CD14-positive monocyte (primary cell): ENCODE measurements at regions of chr4 and their contacts with region 1.

Region 1: DNA sequence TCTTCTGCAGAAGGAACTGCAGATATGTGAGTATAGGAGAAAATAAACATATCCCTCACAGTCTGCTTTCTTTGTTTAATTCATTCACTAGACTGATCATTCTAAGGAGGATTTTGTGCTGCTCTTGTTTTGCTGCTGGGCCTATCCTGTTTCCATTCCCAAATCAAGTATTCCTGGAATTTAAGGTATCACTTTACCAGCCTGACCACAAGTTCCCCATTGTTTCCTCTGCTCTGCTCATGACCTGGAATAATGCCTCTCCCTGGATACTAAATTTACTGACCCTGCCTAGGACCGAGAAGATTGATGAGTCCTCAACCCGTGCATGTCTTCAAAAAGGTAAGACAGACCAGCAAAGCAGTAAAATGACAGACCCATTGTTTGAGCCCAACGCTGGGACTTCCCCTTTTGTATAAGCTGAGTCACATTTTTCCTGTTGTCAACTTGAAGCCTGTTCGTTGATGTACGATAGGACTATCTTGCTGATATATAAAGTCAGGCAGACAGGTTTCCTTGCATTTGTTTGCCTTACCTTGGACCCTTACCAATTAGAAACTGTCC is 85.5 kb upstream of the TET2 start:
- DNase-seq: peak; percentile 81 to 92 (median 90)
- H3K4me3 ChIP-seq: peak overlapping the region; percentile 8 to 53 (median 37)
- H3K4me3 Mint-ChIP-seq: peak overlapping the region; percentile 49 to 72
- H3K27ac ChIP-seq: peak overlapping the region; percentile 67 to 94
- H3K27ac Mint-ChIP-seq: peak overlapping the region; percentile 97 to 100 (median 99)
- H3K4me1 ChIP-seq: peaks cover 73 to 79% of the 10 kb centered on the region in 2 donors
- H3K4me1 Mint-ChIP-seq: peaks cover 76% of the 10 kb centered on the region
- H3K27me3 ChIP-seq: no peaks in the 10 kb centered on the region
- H3K27me3 Mint-ChIP-seq: peaks cover 0 to 3% (median 0%) of the 10 kb centered on the region in 3 donors
- CTCF ChIP-seq: no peak

Region 2: GRCh38 chr4:104811727-104812126 is 249.5 kb before region 1 on chr4:
- intact Hi-C with region 1: no loop called
- DNase-seq: no peak
- H3K4me3 ChIP-seq: no peak overlapping the region
- H3K4me3 Mint-ChIP-seq: no peak overlapping the region
- H3K27ac ChIP-seq: no peak overlapping the region
- H3K27ac Mint-ChIP-seq: no peak overlapping the region
- H3K4me1 ChIP-seq: no peaks in the 10 kb centered on the region
- H3K4me1 Mint-ChIP-seq: no peaks in the 10 kb centered on the region
- H3K27me3 ChIP-seq: no peaks in the 10 kb centered on the region
- H3K27me3 Mint-ChIP-seq: peaks cover 0 to 4% (median 0%) of the 10 kb centered on the region in 3 donors
- CTCF ChIP-seq: no peak

Region 3: DNA sequence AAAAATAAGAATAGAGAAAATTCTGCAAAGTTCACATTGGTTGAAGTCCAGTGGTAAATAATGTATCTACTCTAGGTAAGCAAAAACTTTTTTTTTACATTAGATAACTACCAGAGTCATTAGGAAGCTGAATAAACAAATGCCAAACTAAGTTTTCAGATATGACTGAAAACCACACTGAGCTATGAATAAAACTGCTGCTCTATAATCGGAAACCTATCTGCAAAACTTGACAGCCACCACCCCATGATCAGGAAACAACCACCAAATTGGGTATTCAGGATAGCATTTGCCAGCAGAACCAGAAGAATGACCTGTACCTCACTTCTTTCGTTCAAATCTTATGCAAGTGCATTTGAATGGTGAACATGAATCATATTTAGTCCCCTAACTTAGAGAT is 87.5 kb before region 1 on chr4:
- intact Hi-C with region 1: loop called in 1 of 2 experiments (anchors 10 kb)
- DNase-seq: no peak
- H3K4me3 ChIP-seq: no peak overlapping the region
- H3K4me3 Mint-ChIP-seq: no peak overlapping the region
- H3K27ac ChIP-seq: no peak overlapping the region
- H3K27ac Mint-ChIP-seq: no peak overlapping the region
- H3K4me1 ChIP-seq: peaks cover 15 to 19% of the 10 kb centered on the region in 2 donors
- H3K4me1 Mint-ChIP-seq: peaks cover 14% of the 10 kb centered on the region
- H3K27me3 ChIP-seq: no peaks in the 10 kb centered on the region
- H3K27me3 Mint-ChIP-seq: no peaks in the 10 kb centered on the region
- CTCF ChIP-seq: no peak

Region 4: GRCh38 chr4:105106426-105106825 is 45.2 kb after region 1 on chr4:
- intact Hi-C with region 1: loop called in 1 of 2 experiments (anchors 5 kb)
- DNase-seq: peak in 1 of 3 donors; percentile 11
- H3K4me3 ChIP-seq: peak overlapping the region in 1 of 3 experiments; percentile 26
- H3K4me3 Mint-ChIP-seq: no peak overlapping the region
- H3K27ac ChIP-seq: peak overlapping the region in 1 of 2 donors; percentile 75
- H3K27ac Mint-ChIP-seq: peak overlapping the region in 6 of 7 donors; percentile 0 to 85 (median 73)
- H3K4me1 ChIP-seq: peaks cover 19 to 30% of the 10 kb centered on the region in 2 donors
- H3K4me1 Mint-ChIP-seq: peaks cover 19% of the 10 kb centered on the region
- H3K27me3 ChIP-seq: no peaks in the 10 kb centered on the region
- H3K27me3 Mint-ChIP-seq: peaks cover 0 to 2% (median 0%) of the 10 kb centered on the region in 3 donors
- CTCF ChIP-seq: no peak

Region 5: GRCh38 chr4:105122350-105122749 is 61.1 kb after region 1 on chr4:
- intact Hi-C with region 1: no loop called
- DNase-seq: no peak
- H3K4me3 ChIP-seq: no peak overlapping the region
- H3K4me3 Mint-ChIP-seq: no peak overlapping the region
- H3K27ac ChIP-seq: no peak overlapping the region
- H3K27ac Mint-ChIP-seq: peak overlapping the region in 3 of 7 donors; percentile 12 to 71 (median 25)
- H3K4me1 ChIP-seq: peaks cover 20 to 26% of the 10 kb centered on the region in 2 donors
- H3K4me1 Mint-ChIP-seq: peaks cover 25% of the 10 kb centered on the region
- H3K27me3 ChIP-seq: no peaks in the 10 kb centered on the region
- H3K27me3 Mint-ChIP-seq: no peaks in the 10 kb centered on the region
- CTCF ChIP-seq: no peak